ENCODE measurements at regions of chr1 and their contacts with region 1.

Region 1: GRCh38 chr1:32876341-32877210 is 5.9 kb upstream of the FNDC5 start:
- DNase-seq: peak; percentile 49 to 75 (median 65)
- H3K4me3 ChIP-seq: no peak overlapping the region
- H3K27ac ChIP-seq: no peak overlapping the region
- H3K4me1 ChIP-seq: peaks cover 0 to 2% (median 0%) of the 10 kb centered on the region in 4 experiments
- H3K27me3 ChIP-seq: peaks cover 0 to 30% (median 13%) of the 10 kb centered on the region in 5 experiments

Region 2: DNA sequence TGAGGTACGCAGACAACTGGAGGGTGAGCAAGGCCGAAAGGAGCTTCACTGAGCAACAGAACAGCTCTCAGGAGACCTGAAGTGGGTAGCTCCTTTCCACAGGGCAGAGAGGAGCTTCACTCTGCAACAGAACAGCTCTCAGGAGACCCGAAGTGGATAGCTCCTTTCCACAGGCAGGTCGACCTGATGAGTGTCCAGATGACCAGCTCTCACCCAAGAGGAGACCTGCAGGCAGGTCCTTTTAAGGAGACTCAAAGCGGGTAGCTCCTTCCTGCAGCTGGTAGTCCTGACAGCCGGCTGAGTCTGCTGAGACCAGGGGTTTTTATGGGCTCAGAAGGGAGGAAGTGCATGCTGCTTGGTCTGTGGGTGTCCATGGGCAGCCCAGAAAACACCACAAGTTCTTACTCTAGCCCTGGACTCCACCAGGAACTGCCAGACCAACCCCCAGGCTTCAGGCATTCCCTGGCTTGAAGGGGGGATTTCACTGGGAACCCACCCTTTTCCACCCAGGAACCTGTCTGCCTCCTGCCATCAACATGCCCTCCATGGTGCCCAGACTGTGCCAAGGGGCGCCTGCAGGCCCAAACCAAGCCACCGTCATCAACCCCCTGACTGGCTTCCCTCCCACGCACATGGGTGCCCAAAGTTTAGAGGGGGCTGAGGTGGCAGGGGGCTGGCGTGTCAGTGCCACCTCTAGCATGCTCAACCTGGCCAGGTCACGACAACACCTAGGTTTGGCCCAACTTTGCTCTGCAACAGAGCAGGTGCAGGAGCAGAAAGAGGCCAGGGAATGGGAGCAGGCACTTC is 269.8 kb before region 1 on chr1:
- CTCF ChIA-PET with region 1: no interaction called
- POLR2A ChIA-PET with region 1: no interaction called
- DNase-seq: no peak
- H3K4me3 ChIP-seq: no peak overlapping the region
- H3K27ac ChIP-seq: no peak overlapping the region
- H3K4me1 ChIP-seq: peaks cover 0 to 2% (median 0%) of the 10 kb centered on the region in 4 experiments
- H3K27me3 ChIP-seq: no peaks in the 10 kb centered on the region

Region 3: GRCh38 chr1:32861904-32862695 is 14.5 kb before region 1 on chr1:
- CTCF ChIA-PET with region 1: interaction called, 33 read pairs
- POLR2A ChIA-PET with region 1: no interaction called
- DNase-seq: no peak
- H3K4me3 ChIP-seq: no peak overlapping the region
- H3K27ac ChIP-seq: no peak overlapping the region
- H3K4me1 ChIP-seq: peaks cover 0 to 5% (median 0%) of the 10 kb centered on the region in 4 experiments
- H3K27me3 ChIP-seq: no peaks in the 10 kb centered on the region

Region 4: DNA sequence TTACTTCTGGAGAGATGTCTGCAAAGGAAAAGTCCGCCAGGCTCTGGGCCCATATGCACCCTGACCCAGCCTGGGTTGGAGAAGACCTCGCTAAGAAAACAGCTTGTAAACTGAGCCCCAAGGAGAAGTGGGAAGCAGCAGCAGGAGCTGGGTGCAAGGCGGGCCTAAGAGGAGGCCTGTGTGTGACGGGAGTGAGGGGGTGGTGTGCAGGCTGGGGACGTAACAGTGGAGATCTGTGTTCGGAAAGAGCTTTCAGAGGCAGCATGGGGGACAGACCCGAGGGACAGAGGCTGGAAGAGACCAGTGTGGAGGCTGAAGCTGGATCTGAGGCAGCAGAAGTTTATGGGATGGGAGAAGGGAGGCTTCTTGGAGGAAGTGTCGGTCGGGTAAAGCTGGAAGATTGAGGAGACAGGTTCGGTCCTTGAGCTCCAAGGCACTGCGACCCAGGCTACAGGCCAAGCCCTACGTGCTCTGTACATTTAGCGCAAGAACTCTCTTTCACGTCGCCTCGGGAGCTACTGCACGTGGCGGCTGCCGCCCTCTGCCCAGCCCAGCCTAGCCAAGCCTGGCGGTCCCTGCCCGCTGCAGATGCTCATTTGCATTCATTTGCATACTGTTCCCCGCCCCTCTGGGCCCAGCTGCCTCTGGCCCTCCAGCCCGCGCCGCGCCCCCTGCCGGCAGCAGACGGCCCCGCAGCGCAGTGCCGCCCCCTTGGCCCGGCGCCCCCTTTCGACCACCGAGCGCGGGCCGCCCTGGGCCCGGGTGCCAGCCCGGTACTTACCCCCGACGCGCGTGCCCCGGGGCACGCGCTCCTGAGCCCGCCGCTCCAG is 16.0 kb after region 1 on chr1:
- CTCF ChIA-PET with region 1: interaction called, 23 read pairs
- POLR2A ChIA-PET with region 1: no interaction called
- DNase-seq: peak; percentile 58 to 74 (median 73)
- H3K4me3 ChIP-seq: peak overlapping the region in 5 of 7 experiments; percentile 6 to 67 (median 52)
- H3K27ac ChIP-seq: no peak overlapping the region
- H3K4me1 ChIP-seq: peaks cover 0 to 16% (median 11%) of the 10 kb centered on the region in 4 experiments
- H3K27me3 ChIP-seq: peaks cover 0 to 93% (median 40%) of the 10 kb centered on the region in 5 experiments

Region 5: GRCh38 chr1:33080885-33081553 is 204.4 kb after region 1 on chr1 and contains the start of gene AZIN2:
- CTCF ChIA-PET with region 1: interaction called, 23 read pairs
- POLR2A ChIA-PET with region 1: no interaction called
- DNase-seq: peak; percentile 91 to 96 (median 95)
- H3K4me3 ChIP-seq: peak within 1 kb of the TSS; percentile 17 to 86 (median 65)
- H3K27ac ChIP-seq: no peak within 1 kb of the TSS
- H3K4me1 ChIP-seq: peaks cover 0 to 20% (median 19%) of the 10 kb centered on the region in 4 experiments
- H3K27me3 ChIP-seq: peaks cover 0 to 43% (median 24%) of the 10 kb centered on the region in 5 experiments

Region 6: GRCh38 chr1:33086384-33086850 is 209.8 kb after region 1 on chr1:
- CTCF ChIA-PET with region 1: interaction called, 23 read pairs
- POLR2A ChIA-PET with region 1: no interaction called
- DNase-seq: peak; percentile 67 to 81 (median 77)
- H3K4me3 ChIP-seq: no peak overlapping the region
- H3K27ac ChIP-seq: no peak overlapping the region
- H3K4me1 ChIP-seq: peaks cover 5 to 29% (median 18%) of the 10 kb centered on the region in 4 experiments
- H3K27me3 ChIP-seq: peaks cover 0 to 37% (median 23%) of the 10 kb centered on the region in 5 experiments

Measured in common myeloid progenitor, CD34-positive (primary cell).